ENCODE measurements at regions of chr15 and their contacts with region 1.

Region 1: GRCh38 chr15:75201609-75202250 is at the start of gene C15orf39:
- DNase-seq: peak; percentile 74
- H3K4me3 Mint-ChIP-seq: peak within 1 kb of the TSS; percentile 92
- H3K27ac Mint-ChIP-seq: peak within 1 kb of the TSS; percentile 90
- H3K4me1 Mint-ChIP-seq: peaks cover 62% of the 10 kb centered on the region
- H3K27me3 Mint-ChIP-seq: peaks cover 4% of the 10 kb centered on the region
- total RNA-seq, gene C15orf39: 46.1 and 49.5 TPM in 2 replicates

Region 2: DNA sequence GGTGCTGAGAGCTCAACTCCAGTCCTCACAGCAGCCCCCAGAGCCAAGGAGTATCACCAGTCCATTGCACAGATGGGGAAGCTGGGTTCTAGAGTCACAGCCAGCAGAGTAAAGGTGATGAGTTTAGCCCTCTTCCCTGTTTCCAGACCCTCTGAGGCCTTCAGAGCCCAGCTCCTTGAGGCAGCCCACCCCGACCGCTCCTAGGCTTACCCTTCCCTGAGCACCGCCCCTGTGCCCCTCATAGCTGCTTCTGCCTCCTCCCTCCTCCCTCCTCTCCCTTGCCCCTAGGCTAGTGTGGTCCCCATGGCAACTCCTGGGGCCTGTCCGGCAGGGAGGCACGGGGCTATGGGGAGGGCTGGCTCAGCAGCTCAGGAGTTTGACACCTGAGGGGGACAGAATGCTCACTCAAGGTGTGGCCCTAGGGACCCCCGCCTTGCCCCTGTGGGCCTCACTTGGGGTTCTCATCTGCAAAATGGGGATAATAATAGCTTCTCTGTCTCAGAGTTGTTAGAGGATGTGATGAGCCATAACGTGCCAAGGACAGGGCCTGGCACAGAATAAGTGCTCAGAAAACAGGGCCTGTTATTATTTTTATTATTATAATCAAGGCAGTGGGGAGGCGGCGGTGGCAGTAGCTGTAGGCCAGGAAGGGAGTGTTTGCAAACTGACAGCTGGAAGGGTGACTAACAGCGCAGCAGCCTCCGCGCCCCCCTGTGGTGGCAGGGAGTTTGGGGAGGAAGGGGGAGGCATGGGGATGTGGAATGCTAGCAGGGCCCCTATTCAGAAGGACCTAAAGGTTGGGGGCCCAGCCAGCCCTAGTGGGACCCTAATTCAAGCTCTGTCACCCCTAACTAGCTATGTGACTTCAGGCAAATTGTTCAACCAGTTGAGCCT is 408.3 kb before region 1 on chr15:
- intact Hi-C with region 1: loop called (anchors 2 kb)
- DNase-seq: no peak
- H3K4me3 Mint-ChIP-seq: peak overlapping the region; percentile 42
- H3K27ac Mint-ChIP-seq: peak overlapping the region; percentile 74
- H3K4me1 Mint-ChIP-seq: peaks cover 75% of the 10 kb centered on the region
- H3K27me3 Mint-ChIP-seq: no peaks in the 10 kb centered on the region

Region 3: GRCh38 chr15:74995241-74995778 is 206.4 kb before region 1 on chr15 and contains the start of gene SCAMP5:
- intact Hi-C with region 1: loop called (anchors 1 kb)
- DNase-seq: peak; percentile 92
- H3K4me3 Mint-ChIP-seq: peak within 1 kb of the TSS; percentile 70
- H3K27ac Mint-ChIP-seq: no peak within 1 kb of the TSS
- H3K4me1 Mint-ChIP-seq: peaks cover 4% of the 10 kb centered on the region
- H3K27me3 Mint-ChIP-seq: peaks cover 33% of the 10 kb centered on the region
- total RNA-seq, gene SCAMP5: 2.0 and 3.5 TPM in 2 replicates

Region 4: DNA sequence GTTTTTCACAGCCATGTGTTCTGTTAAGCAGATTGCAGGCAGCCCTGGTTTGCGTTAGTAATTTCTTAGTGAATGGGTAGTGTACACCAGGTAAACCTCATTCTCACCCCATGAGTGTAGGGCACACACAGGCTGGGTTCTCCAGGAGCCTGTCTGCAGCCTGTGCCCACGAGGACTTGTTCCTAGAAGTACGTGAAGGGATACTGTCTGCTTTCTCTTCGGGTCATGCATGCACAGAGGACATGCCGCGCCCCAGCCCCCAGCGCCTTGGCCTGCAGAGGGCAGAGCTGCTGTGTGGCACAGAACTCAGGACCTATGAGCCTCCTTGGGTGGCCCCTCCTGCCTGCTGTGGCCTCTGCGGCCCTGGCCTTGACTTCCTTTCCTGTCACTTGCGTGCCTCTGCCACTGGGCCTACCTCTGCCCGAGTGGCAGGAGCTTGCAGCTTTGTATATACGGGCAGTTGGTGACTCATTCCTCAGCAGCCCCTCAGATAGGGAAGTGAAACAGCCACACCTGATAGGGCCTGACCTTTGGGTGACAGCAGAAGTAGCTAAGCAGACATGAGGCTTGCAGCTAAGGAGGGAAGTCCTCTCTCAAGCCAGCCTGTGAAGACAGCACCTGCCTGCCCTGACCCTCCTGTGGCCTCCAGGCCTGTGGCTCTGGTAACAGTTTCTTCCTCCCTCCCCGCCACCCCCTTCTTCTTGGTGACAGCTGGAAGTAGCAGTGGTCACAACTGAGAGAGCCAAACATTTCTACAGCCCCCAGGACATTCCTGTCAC is 158.8 kb before region 1 on chr15:
- intact Hi-C with region 1: loop called (anchors 1 kb)
- DNase-seq: peak; percentile 71
- H3K4me3 Mint-ChIP-seq: peak overlapping the region; percentile 41
- H3K27ac Mint-ChIP-seq: peak overlapping the region; percentile 77
- H3K4me1 Mint-ChIP-seq: peaks cover 87% of the 10 kb centered on the region
- H3K27me3 Mint-ChIP-seq: no peaks in the 10 kb centered on the region

Region 5: GRCh38 chr15:75130597-75131268 is 71.0 kb before region 1 on chr15:
- intact Hi-C with region 1: loop called (anchors 1 kb)
- DNase-seq: peak; percentile 28
- H3K4me3 Mint-ChIP-seq: peak overlapping the region; percentile 62
- H3K27ac Mint-ChIP-seq: peak overlapping the region; percentile 44
- H3K4me1 Mint-ChIP-seq: peaks cover 30% of the 10 kb centered on the region
- H3K27me3 Mint-ChIP-seq: peaks cover 20% of the 10 kb centered on the region

Region 6: DNA sequence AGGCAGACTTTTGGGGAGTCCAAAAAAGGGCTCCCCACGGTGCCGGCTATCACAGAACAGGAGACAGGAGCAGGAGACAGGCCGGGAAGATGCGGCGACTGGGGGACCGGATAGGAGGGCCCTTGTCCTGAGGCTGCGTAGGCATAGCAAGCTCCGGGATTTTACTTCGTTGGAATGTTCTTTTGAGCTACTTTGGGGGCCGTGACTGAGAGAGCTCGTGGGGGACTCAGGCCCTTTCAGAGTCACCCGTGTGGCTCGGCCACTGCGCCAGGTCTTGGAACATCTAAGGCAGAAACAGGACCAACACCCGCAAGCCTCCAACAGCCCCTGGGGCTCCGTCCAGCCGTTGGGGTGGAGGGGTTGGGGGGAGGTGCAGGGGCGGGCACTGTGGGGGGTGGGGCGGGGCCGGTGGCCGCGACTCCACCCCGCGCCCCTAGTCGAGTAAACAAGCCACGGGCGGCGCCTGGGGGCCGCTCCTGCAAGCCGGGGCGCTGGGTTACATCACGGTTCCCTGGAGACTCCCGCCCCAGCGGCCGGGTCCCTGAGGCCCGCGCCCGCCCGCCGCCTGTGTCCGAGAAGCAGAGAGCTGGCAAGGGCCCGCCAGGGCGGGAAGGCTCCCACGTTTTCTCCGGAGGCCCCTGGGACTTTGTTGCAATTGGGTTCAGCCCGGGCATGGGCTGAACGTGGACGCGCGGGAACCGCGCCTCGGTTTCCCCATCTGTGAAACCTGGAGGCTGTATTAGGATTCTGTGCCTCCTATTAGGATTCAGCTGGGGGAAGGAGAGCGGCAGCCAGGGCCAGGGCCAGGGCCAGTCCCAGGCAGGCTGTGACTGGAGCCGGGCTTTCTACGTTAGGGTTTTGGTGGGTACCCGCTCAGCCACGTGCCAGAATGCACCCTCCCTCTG is 23.3 kb before region 1 on chr15:
- intact Hi-C with region 1: loop called (anchors 2 kb)
- DNase-seq: no peak
- H3K4me3 Mint-ChIP-seq: no peak overlapping the region
- H3K27ac Mint-ChIP-seq: peak overlapping the region; percentile 58
- H3K4me1 Mint-ChIP-seq: peaks cover 38% of the 10 kb centered on the region
- H3K27me3 Mint-ChIP-seq: peaks cover 40% of the 10 kb centered on the region

Measured in activated T-helper 1 cell treated with anti-CD3 and anti-CD28 coated beads, Interleukin-12 subunit alpha, Interleukin-12 subunit beta, Interleukin-2, Interleukin-4 antibody, amounts not matched to agents 30 ng/mL and 10 ng/mL and 1 ng/mL, durations not matched to agents 14 hours and 24 hours and 36 hours (primary cell).